SK-N-SH (cell line): ENCODE measurements at regions of chr3 and their contacts with region 1.

Region 1: DNA sequence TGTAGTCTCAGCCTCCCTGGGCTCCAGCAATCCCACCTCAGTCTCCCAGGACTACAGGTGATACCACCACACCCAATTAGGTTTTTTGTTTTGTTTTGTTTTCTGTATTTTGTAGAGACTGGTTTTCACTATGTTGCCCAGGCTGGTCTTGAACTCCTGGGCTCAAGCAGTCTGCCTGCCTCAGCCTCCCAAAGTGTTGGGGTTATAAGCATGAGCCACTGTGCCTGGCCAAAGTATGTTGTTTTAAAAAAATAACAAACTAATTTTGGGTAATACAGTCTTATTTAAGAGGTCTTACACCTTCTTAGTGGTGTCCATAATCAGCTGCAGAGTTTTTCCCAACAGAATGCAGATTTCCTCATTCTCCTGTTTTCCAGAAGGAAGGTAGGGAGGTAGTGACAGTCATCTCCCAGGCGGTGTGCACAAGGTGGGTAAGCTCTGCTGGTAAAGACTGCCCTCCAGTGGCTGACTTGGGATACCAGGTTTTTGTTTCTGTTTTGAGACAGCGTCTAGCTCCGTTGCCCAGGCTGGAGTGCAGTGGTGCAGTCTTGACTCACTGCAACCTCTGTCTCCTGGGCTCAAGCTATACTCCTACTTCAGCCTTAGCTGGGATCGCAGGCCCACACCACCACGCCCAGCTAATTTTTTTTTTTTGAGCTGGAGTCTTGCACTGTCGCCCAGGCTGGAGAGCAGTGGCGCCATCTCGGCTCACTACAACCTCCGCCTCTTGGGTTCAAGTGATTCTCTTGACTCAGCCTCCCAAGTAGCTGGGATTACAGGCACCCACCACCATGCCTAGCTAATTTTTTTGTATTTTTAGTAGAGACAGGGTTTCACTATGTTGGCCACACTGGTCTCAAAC is 58.4 kb downstream of the MAP6D1 start:
- DNase-seq: peak; percentile 75
- H3K4me3 ChIP-seq: no peak overlapping the region; a peak in 1 of 4 replicates
- H3K27ac ChIP-seq: no peak overlapping the region
- H3K4me1 ChIP-seq: peaks cover 4% of the 10 kb centered on the region in 2 experiments; a peak in 1 of 4 replicates
- H3K27me3 ChIP-seq: no peaks in the 10 kb centered on the region
- CTCF ChIP-seq: peak; percentile 83
- EP300 ChIP-seq: no peak
- RAD21 ChIP-seq: peak; percentile 88

Region 2: DNA sequence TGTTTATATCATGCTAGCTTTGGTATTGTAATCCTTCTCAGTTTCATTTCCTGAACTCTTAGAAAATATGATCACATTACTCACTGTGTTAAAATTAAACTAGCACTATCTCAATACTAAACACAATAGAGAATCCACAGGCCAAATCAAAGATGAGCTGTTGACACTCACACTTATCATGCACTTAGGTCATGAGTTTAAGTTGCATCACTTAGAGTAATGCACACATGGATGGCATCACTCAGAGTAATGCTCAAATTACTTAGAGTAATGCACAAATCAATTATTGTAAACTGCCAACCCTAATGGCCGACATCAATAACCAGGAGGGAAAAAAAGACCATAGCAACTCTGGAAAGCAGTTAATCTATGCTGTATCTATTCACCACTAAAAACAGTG is 298.6 kb before region 1 on chr3:
- CTCF ChIA-PET with region 1: interaction called, 28 read pairs
- POLR2A ChIA-PET with region 1: no interaction called
- DNase-seq: no peak
- H3K4me3 ChIP-seq: no peak overlapping the region
- H3K27ac ChIP-seq: no peak overlapping the region
- H3K4me1 ChIP-seq: no peaks in the 10 kb centered on the region
- H3K27me3 ChIP-seq: no peaks in the 10 kb centered on the region; the same call in 1 of the 2 replicates
- CTCF ChIP-seq: no peak
- EP300 ChIP-seq: no peak
- RAD21 ChIP-seq: no peak

Region 3: DNA sequence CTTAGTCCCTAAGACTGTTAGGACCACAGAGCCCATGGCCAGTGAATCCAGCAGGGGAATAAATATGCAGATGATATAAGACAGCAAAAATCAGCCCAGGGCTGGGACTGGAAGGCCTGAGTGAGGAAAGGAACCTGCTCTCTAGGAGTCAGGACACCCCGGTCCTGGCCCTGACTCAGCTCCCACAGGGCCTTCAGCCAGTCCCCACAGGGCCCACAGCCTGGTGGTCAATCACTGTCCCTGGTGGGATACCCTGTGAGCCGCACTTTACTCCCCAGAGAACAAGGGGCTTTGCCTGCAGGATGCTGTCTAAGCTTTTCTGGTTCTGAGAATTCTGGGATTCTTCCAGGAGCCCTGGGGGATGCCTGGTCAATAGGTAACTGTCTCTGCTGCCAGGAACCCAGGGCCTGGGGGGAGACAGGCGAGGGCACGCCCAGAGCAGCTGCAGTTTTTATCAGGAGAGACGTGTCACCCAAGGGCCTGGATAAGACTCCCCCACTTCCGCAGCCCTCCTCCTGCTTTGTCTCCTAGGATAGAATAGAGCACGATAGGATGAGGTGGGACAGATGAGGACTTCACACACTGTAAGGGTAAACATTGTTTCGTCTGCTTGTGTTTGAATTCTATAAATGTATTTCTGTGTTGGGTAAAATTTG is 289.0 kb before region 1 on chr3:
- CTCF ChIA-PET with region 1: interaction called, 12 read pairs
- POLR2A ChIA-PET with region 1: no interaction called
- DNase-seq: no peak
- H3K4me3 ChIP-seq: no peak overlapping the region
- H3K27ac ChIP-seq: no peak overlapping the region
- H3K4me1 ChIP-seq: peaks cover 0 to 8% of the 10 kb centered on the region in 2 experiments; a peak in 1 of 4 replicates
- H3K27me3 ChIP-seq: no peaks in the 10 kb centered on the region; the same call in 1 of the 2 replicates
- CTCF ChIP-seq: no peak
- EP300 ChIP-seq: no peak
- RAD21 ChIP-seq: no peak

Region 4: GRCh38 chr3:183502237-183503181 is 264.5 kb before region 1 on chr3:
- CTCF ChIA-PET with region 1: interaction called, 11 read pairs
- POLR2A ChIA-PET with region 1: no interaction called
- DNase-seq: peak; percentile 44
- H3K4me3 ChIP-seq: no peak overlapping the region
- H3K27ac ChIP-seq: no peak overlapping the region
- H3K4me1 ChIP-seq: no peaks in the 10 kb centered on the region
- H3K27me3 ChIP-seq: no peaks in the 10 kb centered on the region; the same call in none of the 2 replicates
- CTCF ChIP-seq: peak; percentile 44
- EP300 ChIP-seq: no peak
- RAD21 ChIP-seq: peak; percentile 75

Region 5: DNA sequence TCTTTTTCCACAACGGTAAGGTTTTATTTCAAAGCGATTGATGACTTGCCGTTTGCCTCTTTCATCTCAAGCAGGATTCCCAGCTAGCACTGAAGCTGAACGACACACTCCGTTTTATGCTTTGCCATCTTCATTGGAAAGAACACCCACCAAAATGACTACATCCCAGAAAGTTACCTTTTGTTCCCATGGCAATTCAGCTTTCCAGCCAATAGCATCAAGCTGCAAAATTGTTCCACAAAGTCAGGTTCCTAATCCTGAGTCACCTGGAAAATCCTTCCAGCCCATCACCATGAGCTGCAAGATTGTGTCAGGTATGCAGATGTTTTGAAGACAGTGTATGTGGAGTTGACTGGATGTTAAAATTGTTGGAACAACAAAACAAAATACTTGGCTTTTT is 12.9 kb before region 1 on chr3:
- CTCF ChIA-PET with region 1: interaction called, 14 read pairs
- POLR2A ChIA-PET with region 1: no interaction called
- DNase-seq: no peak
- H3K4me3 ChIP-seq: no peak overlapping the region
- H3K27ac ChIP-seq: no peak overlapping the region
- H3K4me1 ChIP-seq: no peaks in the 10 kb centered on the region
- H3K27me3 ChIP-seq: no peaks in the 10 kb centered on the region
- CTCF ChIP-seq: no peak
- EP300 ChIP-seq: no peak
- RAD21 ChIP-seq: no peak

Region 6: GRCh38 chr3:183937610-183938230 is 170.7 kb after region 1 on chr3:
- CTCF ChIA-PET with region 1: no interaction called
- POLR2A ChIA-PET with region 1: no interaction called
- DNase-seq: no peak
- H3K4me3 ChIP-seq: no peak overlapping the region
- H3K27ac ChIP-seq: no peak overlapping the region
- H3K4me1 ChIP-seq: no peaks in the 10 kb centered on the region
- H3K27me3 ChIP-seq: no peaks in the 10 kb centered on the region
- CTCF ChIP-seq: no peak
- EP300 ChIP-seq: no peak
- RAD21 ChIP-seq: no peak

Region 7: GRCh38 chr3:184058029-184058428 is 291.1 kb after region 1 on chr3:
- CTCF ChIA-PET with region 1: no interaction called
- POLR2A ChIA-PET with region 1: no interaction called
- DNase-seq: no peak
- H3K4me3 ChIP-seq: no peak overlapping the region
- H3K27ac ChIP-seq: no peak overlapping the region
- H3K4me1 ChIP-seq: no peaks in the 10 kb centered on the region
- H3K27me3 ChIP-seq: no peaks in the 10 kb centered on the region; the same call in 1 of the 2 replicates
- CTCF ChIP-seq: no peak
- EP300 ChIP-seq: no peak
- RAD21 ChIP-seq: no peak